Heart left ventricle (tissue), 16 donors: ENCODE measurements at regions of chr21 and their contacts with region 1.

Region 1: GRCh38 chr21:33199516-33200217 is 30.1 kb upstream of the IFNAR2 start:
- DNase-seq: peak in 4 of 5 donors; percentile 78 to 86 (median 82)
- ATAC-seq: peak; percentile 67 to 76 (median 74)
- H3K4me3 ChIP-seq: no peak overlapping the region
- H3K27ac ChIP-seq: peak overlapping the region in 11 of 12 donors; percentile 41 to 93 (median 76)
- H3K4me1 ChIP-seq: peaks cover 0 to 55% (median 33%) of the 10 kb centered on the region in 12 donors
- H3K27me3 ChIP-seq: no peaks in the 10 kb centered on the region
- CTCF ChIP-seq: peak; percentile 68 to 92 (median 80)
- POLR2A ChIP-seq: no peak

Region 2: GRCh38 chr21:32940079-32941014 is 259.3 kb before region 1 on chr21:
- intact Hi-C with region 1: loop called (anchors 1 to 5 kb)
- DNase-seq: peak in 3 of 5 donors; percentile 27 to 35 (median 32)
- ATAC-seq: peak in 1 of 4 donors; percentile 70
- H3K4me3 ChIP-seq: no peak overlapping the region
- H3K27ac ChIP-seq: no peak overlapping the region
- H3K4me1 ChIP-seq: no peaks in the 10 kb centered on the region
- H3K27me3 ChIP-seq: peaks cover 0 to 3% (median 0%) of the 10 kb centered on the region in 9 donors
- CTCF ChIP-seq: peak; percentile 64 to 84 (median 76)
- POLR2A ChIP-seq: no peak

Region 3: DNA sequence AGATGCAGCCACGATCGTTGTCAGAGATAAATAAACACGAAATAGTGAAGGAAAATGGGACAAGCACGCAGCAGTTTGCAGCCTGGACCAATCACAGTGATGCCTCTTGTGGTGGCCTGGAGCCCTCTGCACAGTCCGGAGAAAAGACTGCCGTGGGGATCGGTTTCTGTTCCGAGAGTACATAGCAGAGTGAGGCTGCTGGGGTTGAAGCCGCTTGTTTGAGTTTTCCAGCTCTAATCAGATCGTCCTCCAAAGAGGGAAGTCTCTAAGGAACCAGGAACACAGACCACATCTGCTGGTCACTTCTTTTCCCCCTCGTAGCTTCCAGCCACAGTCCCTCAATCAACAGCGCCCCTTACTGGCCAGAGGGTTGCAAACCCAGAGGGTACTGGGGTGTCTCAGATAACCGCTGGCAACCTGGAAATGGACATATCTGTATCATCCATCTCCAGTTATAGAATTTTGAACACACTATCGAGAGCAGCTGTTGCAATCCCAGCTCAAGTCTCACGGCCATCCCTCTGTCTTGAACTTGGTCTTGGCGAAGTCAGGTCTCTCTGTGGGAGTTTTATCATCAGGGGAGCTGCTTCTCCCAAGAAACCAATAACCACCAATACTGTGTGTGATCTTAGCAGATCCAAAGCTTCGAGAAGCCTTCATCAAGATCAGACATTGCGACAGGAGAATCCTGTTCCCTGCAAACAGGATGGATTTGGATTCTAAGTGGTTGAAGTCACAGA is 72.3 kb before region 1 on chr21:
- intact Hi-C with region 1: loop called in 1 of 10 experiments (anchors 5 kb)
- DNase-seq: peak; percentile 53 to 77 (median 67)
- ATAC-seq: peak; percentile 64 to 91 (median 90)
- H3K4me3 ChIP-seq: peak overlapping the region in 10 of 12 donors; percentile 12 to 52 (median 40)
- H3K27ac ChIP-seq: no peak overlapping the region
- H3K4me1 ChIP-seq: peaks cover 0 to 9% (median 2%) of the 10 kb centered on the region in 12 donors
- H3K27me3 ChIP-seq: peaks cover 0 to 39% (median 9%) of the 10 kb centered on the region in 9 donors
- CTCF ChIP-seq: peak; percentile 46 to 81 (median 70)
- POLR2A ChIP-seq: no peak

Region 4: DNA sequence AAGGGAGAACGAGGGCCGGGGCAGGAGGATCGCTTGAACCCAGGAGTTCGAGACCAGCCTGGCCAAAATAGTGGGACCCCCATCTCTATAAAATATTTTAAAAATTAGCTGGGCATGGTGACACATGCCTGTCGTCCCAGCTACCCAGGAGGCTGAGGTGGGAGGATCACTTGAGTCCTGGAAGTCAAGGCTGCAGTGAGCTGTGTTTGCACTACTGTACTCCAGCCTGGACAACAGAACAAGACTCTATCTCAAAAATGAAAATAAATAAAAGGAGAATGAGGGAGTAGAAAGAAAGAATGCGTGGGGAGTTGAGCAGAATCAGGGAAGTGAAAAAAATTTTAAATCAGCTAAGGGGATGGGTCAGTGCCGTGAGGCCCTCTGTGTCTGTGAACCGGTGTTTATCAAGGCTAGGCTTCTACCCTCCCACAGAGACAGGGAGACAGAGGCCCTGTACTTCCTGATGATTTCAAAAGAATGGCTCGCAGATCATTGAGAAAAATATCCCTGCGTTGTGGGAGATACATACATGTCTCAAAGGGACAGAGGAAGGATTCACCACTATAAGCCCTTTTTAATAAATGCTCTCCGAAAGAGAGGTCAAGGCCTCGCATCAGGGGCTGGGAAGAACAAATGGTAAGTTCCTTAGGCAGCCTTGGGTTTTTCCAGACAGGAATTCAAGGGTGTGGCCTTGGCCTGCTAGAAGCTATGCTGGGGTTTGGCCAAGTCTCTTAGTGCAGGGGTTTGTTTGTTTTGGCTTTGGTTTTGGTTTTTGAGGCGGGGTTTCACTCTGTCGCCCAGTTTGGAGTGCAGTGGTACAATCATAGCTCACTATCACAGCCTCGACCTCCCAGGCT is 87.2 kb after region 1 on chr21:
- intact Hi-C with region 1: no loop called
- DNase-seq: peak in 4 of 5 donors; percentile 62 to 81 (median 66)
- ATAC-seq: peak; percentile 47 to 90 (median 80)
- H3K4me3 ChIP-seq: peak overlapping the region in 1 of 12 donors; percentile 16
- H3K27ac ChIP-seq: peak overlapping the region; percentile 26 to 86 (median 70)
- H3K4me1 ChIP-seq: peaks cover 0 to 44% (median 26%) of the 10 kb centered on the region in 12 donors
- H3K27me3 ChIP-seq: no peaks in the 10 kb centered on the region
- CTCF ChIP-seq: no peak
- POLR2A ChIP-seq: no peak

Region 5: GRCh38 chr21:33374450-33375096 is 174.9 kb after region 1 on chr21:
- intact Hi-C with region 1: loop called (anchors 1 to 5 kb)
- DNase-seq: peak in 3 of 5 donors; percentile 54 to 58 (median 57)
- ATAC-seq: peak; percentile 70 to 78 (median 75)
- H3K4me3 ChIP-seq: no peak overlapping the region
- H3K27ac ChIP-seq: peak overlapping the region in 5 of 12 donors; percentile 11 to 91 (median 34)
- H3K4me1 ChIP-seq: peaks cover 0 to 50% (median 5%) of the 10 kb centered on the region in 12 donors
- H3K27me3 ChIP-seq: no peaks in the 10 kb centered on the region
- CTCF ChIP-seq: peak; percentile 41 to 80 (median 67)
- POLR2A ChIP-seq: no peak

Region 6: DNA sequence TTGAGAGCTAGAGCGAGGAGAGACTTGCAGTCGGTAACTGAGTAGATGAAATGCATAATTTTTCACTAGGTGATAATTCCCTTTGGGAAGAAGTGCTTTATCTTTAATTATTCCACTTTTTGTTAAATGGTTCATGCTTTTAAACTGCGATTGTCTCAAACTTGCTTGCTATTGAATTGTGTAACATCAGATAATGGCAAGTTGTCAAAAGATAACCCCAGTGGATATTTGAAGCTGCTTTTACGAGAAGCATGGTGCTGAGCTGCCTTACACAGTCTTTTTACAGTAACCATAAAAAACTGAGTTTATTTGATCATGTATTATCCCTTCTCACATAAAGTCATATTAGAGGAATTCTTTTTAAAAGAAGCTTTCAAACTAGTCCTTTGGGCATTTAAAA is 249.9 kb after region 1 on chr21:
- intact Hi-C with region 1: loop called in 9 of 10 experiments (anchors 1 to 5 kb)
- DNase-seq: no peak
- ATAC-seq: no peak
- H3K4me3 ChIP-seq: no peak overlapping the region
- H3K27ac ChIP-seq: no peak overlapping the region
- H3K4me1 ChIP-seq: peaks cover 0 to 17% (median 4%) of the 10 kb centered on the region in 12 donors
- H3K27me3 ChIP-seq: no peaks in the 10 kb centered on the region
- CTCF ChIP-seq: no peak
- POLR2A ChIP-seq: no peak